ENCODE measurements at regions of chr5 and their contacts with region 1.

Region 1: DNA sequence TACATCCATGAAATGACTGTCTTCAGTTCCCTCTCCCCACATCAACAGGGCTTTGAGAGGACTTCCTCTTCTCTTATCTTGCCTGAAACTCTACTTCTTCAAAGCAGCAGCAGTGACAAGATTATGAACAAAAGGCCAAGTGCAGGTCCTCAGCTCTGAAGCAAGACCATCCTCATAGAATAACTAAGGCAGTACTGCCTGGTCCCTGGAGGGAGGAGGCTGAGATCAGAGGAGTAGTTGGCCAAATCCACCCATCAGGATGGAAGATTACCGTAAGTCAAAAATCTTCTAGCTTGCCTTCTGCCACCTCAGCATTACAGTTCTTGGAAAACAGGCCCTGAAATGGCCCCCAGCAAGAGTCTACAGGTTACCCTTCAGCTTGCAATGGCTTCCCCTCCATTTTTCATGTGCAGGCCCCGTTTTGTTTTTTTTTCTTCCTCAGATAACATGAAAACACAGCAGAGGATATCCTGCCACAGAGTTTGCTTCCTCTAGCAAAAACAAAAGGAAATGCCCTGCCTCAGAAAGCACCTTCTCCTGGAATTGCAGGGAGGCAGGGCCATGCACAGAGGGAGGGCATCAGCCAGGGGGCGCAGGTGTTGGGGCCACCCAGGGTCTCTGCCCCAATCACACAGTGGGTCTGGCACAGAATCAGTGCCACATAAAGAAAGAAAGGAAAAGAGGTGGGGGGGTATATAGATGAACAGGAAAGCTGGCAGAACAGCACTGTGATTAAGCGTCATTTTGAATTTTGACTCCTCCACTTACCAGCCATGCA is 40.0 kb downstream of the KLHL3 start:
- DNase-seq: peak in 1 of 5 donors; percentile 30
- ATAC-seq: peak in 3 of 4 donors; percentile 30 to 59 (median 43)
- H3K4me3 ChIP-seq: no peak overlapping the region
- H3K27ac ChIP-seq: peak overlapping the region; percentile 1 to 80 (median 55)
- H3K4me1 ChIP-seq: peaks cover 0 to 67% (median 36%) of the 10 kb centered on the region in 12 donors
- H3K27me3 ChIP-seq: no peaks in the 10 kb centered on the region
- CTCF ChIP-seq: peak in 11 of 12 donors; percentile 7 to 59 (median 34)
- POLR2A ChIP-seq: no peak

Region 2: DNA sequence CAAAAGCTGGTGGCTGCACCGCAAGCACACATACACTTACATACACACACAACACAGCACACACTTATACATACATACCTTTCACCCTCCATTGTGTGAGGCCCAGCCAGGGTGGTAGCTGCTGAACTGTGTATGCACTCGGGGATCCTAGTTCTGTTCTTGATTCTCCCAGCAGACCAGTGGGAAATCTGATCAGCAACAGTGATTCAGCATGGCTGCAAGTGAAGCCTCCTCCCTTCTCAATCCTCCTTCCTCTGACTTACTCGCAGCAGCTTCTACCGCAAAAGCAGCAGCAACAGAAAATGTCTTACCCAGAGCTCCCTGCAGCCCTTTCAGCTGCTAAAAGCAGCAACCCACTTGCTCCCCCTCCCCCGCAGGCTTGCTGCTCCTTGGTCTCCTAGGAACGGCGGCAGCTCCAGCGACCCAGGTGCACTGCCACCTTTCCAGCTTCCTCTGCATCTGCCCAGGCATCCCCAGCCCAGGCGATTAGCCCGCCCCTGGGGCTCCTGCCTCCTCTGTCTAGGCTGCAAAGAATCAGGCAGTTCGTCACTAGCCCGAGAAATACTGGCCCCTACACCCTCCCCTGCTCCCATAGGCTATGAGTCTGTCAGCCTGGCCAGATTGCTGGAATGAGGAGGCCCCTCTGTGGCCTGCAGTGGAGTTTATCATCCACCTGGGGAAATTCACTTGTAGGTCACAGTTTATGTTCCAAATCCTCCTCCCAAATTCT is 39.9 kb after region 1 on chr5 and contains the start of gene KLHL3:
- intact Hi-C with region 1: loop called in 4 of 10 experiments (anchors 5 kb)
- DNase-seq: peak in 4 of 5 donors; percentile 40 to 48 (median 45)
- ATAC-seq: peak; percentile 49 to 80 (median 76)
- H3K4me3 ChIP-seq: peak within 1 kb of the TSS; percentile 25 to 66 (median 54)
- H3K27ac ChIP-seq: peak within 1 kb of the TSS; percentile 55 to 90 (median 72)
- H3K4me1 ChIP-seq: peaks cover 5 to 71% (median 43%) of the 10 kb centered on the region in 12 donors
- H3K27me3 ChIP-seq: no peaks in the 10 kb centered on the region
- CTCF ChIP-seq: peak in 7 of 12 donors; percentile 21 to 46 (median 27)
- POLR2A ChIP-seq: no peak
- total RNA-seq, gene KLHL3: 16.9 to 77.6 (median 26.1) TPM

Measured in heart left ventricle (tissue), 16 donors.